GM18951 (cell line): ENCODE measurements at regions of chr21 and their contacts with region 1.

Region 1: DNA sequence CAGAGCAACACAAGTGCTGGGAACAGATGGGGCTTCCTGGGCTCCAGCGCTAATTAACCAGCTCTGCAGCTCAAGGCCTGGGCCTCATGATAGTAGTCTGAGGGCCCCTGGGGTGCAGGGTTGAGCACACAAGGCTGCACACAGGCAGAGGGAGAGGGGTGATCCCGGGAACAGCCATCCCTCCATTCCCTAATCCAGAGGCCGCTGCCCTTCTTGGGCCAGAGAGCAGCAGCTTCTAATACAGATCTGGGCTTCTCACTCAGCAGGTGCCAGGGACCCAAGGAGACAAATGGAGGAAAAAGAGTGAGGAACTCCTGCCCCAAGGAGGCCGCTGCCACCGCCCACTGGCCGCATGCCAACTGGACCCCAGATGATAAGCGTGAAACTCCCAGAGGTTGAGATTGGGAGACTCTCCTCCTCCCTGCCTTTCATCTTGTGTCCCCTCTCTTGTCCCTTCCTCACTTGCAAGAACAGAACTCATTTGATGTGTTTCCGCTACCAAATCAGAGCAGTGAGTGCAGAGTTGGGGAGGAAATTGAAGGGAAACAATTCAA is 58.0 kb upstream of the IFNAR2 start:
- POLR2A ChIP-seq: no peak

Region 2: DNA sequence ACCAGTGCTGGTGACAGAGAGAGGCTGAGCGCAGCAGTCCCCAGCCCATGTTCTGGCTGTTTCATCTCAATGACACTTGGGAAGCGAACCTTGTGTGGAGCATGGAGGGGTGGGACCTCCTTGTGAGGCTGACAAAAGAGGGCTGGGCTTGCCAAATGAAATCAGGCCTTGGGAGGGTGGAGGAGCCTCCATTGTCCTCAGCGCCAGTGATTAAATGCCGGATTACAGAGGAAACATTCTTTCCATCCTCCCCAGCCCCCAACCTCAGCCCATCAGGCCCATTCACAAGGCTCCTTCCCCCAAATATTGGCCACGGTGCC is 336.8 kb before region 1 on chr21:
- in situ Hi-C with region 1: loop called (anchors 10 kb)
- POLR2A ChIP-seq: no peak